ENCODE measurements at regions of chr6 and their contacts with region 1.

Region 1: DNA sequence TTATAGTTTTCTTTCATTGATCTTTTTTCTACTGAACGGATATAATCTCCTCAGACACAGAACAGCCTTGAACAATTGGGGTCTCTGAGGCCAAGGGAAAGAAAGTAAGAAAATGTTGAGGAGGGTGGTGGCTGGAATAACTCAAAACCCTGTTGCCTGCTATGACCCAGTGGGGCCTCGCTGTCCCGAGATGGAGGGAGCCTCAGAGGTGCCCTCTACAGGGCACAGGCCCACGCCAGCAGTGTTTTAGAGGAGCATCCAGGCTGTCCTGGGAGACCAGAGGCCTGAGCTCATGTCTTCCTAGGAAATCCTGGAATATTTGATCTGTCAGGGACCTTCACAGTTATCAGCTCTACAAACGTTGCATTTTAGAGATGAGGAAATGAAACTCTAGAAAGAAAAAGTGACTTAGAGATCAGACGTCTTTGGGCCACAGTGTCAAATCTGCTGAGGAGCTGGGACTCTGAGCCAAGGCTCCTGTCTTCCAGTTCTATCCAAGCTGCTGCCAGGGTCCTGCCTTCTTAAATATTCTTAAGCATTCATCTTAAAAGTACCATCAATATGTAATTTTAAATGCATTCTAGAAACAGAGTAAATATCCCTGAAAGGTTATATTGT is 26.3 kb downstream of the ALDH5A1 start:
- DNase-seq: peak; percentile 23
- ATAC-seq: peak; percentile 100
- H3K4me3 ChIP-seq: no peak overlapping the region
- H3K27ac ChIP-seq: no peak overlapping the region
- H3K4me1 ChIP-seq: no peaks in the 10 kb centered on the region
- H3K27me3 ChIP-seq: no peaks in the 10 kb centered on the region
- CTCF ChIP-seq: peak; percentile 50 to 94 (median 85); a peak in 5 of 6 replicates
- POLR2A ChIP-seq: no peak
- RAD21 ChIP-seq: peak; percentile 50

Region 2: GRCh38 chr6:24431045-24431451 is 90.0 kb before region 1 on chr6:
- CTCF ChIA-PET with region 1: interaction called, 3 read pairs
- POLR2A ChIA-PET with region 1: no interaction called
- RAD21 ChIA-PET with region 1: no interaction called
- intact Hi-C with region 1: loop called (anchors 1 kb)
- DNase-seq: peak; percentile 38
- ATAC-seq: peak; percentile 90
- H3K4me3 ChIP-seq: no peak overlapping the region
- H3K27ac ChIP-seq: no peak overlapping the region
- H3K4me1 ChIP-seq: peaks cover 0 to 7% of the 10 kb centered on the region in 2 experiments; a peak in 2 of 4 replicates
- H3K27me3 ChIP-seq: no peaks in the 10 kb centered on the region
- CTCF ChIP-seq: peak; percentile 60 to 77 (median 68); a peak in 5 of 6 replicates
- POLR2A ChIP-seq: no peak
- RAD21 ChIP-seq: peak; percentile 73

Region 3: DNA sequence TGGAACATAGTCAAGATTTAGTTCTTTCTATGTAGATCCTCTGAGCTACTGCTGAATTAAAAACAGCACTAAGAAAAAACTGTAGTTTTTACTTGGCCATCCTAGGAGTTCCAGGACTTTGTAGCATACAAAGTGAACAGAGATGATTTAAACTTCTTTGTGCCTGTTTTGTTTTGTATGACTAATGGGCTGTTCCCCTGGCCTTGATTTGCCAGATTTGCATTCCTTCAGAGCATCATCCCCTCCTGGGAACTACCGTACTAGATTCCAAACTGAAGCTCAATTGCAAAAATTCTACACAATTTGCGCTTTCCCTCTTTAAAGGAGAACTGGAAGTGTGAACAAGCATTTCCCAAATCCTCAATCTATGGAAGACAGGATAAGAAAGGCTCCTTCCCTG is 168.9 kb after region 1 on chr6:
- CTCF ChIA-PET with region 1: no interaction called
- POLR2A ChIA-PET with region 1: no interaction called
- RAD21 ChIA-PET with region 1: no interaction called
- intact Hi-C with region 1: loop called (anchors 1 kb)
- DNase-seq: no peak
- ATAC-seq: no peak
- H3K4me3 ChIP-seq: no peak overlapping the region
- H3K27ac ChIP-seq: no peak overlapping the region
- H3K4me1 ChIP-seq: no peaks in the 10 kb centered on the region
- H3K27me3 ChIP-seq: no peaks in the 10 kb centered on the region
- CTCF ChIP-seq: no peak
- POLR2A ChIP-seq: no peak
- RAD21 ChIP-seq: no peak

Region 4: DNA sequence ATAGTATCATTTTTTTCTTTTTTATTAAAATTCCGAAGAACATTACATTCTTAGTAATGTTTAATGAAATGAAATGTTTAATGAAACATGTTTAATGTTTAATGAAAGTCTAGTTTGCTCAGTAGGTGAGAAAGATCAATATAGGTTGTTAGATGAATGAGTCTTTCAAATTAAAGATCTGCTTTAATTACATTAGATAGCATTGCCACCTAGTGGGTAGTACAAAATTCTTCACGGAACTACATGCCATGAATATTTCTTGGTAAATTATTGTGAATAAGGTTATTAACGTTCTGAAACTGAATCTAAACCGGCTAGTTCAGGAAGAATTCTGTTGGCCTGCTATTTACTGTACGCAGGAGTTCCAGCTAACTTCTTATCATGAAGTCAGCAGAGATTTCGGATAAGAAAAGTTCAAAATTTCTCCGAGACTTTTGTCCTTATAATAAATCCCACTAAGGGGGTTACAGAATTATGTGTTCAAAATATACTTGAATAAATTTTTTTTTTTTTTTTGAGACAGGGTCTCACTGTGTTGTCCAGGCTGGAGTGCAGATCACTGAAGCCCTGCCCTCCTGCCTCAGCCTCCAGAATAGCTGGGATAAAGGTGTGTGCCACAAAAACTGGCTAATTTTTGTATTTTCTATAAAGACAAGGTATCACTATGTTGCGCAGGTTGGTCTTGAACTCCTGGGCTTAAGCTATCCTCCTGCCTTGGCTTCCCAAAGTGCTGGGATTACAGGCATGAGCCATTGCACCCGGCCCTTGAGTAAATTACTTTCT is 245.8 kb after region 1 on chr6:
- CTCF ChIA-PET with region 1: interaction called, 3 read pairs
- POLR2A ChIA-PET with region 1: no interaction called
- RAD21 ChIA-PET with region 1: interaction called in 1 of 2 experiments, 3 read pairs
- intact Hi-C with region 1: loop called (anchors 1 kb)
- DNase-seq: no peak
- ATAC-seq: peak; percentile 71
- H3K4me3 ChIP-seq: no peak overlapping the region
- H3K27ac ChIP-seq: no peak overlapping the region
- H3K4me1 ChIP-seq: 0 out of 4 replicates have a peak, but pooled peaks cover 0 to 2% of the 10 kb centered on the region in 2 experiments
- H3K27me3 ChIP-seq: no peaks in the 10 kb centered on the region
- CTCF ChIP-seq: peak; percentile 28 to 71 (median 65); a peak in 5 of 6 replicates
- POLR2A ChIP-seq: no peak
- RAD21 ChIP-seq: peak; percentile 82